ENCODE measurements at regions of chr11 and their contacts with region 1.

Region 1: GRCh38 chr11:20397281-20397680 is 9.8 kb downstream of the PRMT3 start:
- DNase-seq: peak in 7 of 9 donors; percentile 12 to 53 (median 31)
- ATAC-seq: peak; percentile 82
- H3K4me3 ChIP-seq: no peak overlapping the region
- H3K4me3 Mint-ChIP-seq: no peak overlapping the region
- H3K27ac ChIP-seq: no peak overlapping the region
- H3K27ac Mint-ChIP-seq: peak overlapping the region in 1 of 9 donors; percentile 19
- H3K4me1 ChIP-seq: peaks cover 0 to 6% of the 10 kb centered on the region in 2 donors
- H3K4me1 Mint-ChIP-seq: peaks cover 1 to 23% (median 16%) of the 10 kb centered on the region in 7 donors
- H3K27me3 ChIP-seq: no peaks in the 10 kb centered on the region
- H3K27me3 Mint-ChIP-seq: no peaks in the 10 kb centered on the region

Region 2: GRCh38 chr11:20355221-20356219 is 41.8 kb before region 1 on chr11:
- CTCF ChIA-PET with region 1: no interaction called
- POLR2A ChIA-PET with region 1: no interaction called
- intact Hi-C with region 1: no loop called
- DNase-seq: peak in 6 of 9 donors; percentile 14 to 38 (median 23)
- ATAC-seq: peak; percentile 62
- H3K4me3 ChIP-seq: no peak overlapping the region
- H3K4me3 Mint-ChIP-seq: no peak overlapping the region
- H3K27ac ChIP-seq: no peak overlapping the region
- H3K27ac Mint-ChIP-seq: no peak overlapping the region
- H3K4me1 ChIP-seq: peaks cover 4 to 5% of the 10 kb centered on the region in 2 donors
- H3K4me1 Mint-ChIP-seq: peaks cover 8 to 30% (median 14%) of the 10 kb centered on the region in 7 donors
- H3K27me3 ChIP-seq: no peaks in the 10 kb centered on the region
- H3K27me3 Mint-ChIP-seq: peaks cover 0 to 9% (median 0%) of the 10 kb centered on the region in 5 donors

Region 3: GRCh38 chr11:20443596-20443995 is 46.3 kb after region 1 on chr11:
- CTCF ChIA-PET with region 1: no interaction called
- POLR2A ChIA-PET with region 1: no interaction called
- intact Hi-C with region 1: loop called (anchors 1 kb)
- DNase-seq: peak in 4 of 9 donors; percentile 1 to 4 (median 2)
- ATAC-seq: no peak
- H3K4me3 ChIP-seq: no peak overlapping the region
- H3K4me3 Mint-ChIP-seq: no peak overlapping the region
- H3K27ac ChIP-seq: no peak overlapping the region
- H3K27ac Mint-ChIP-seq: no peak overlapping the region
- H3K4me1 ChIP-seq: no peaks in the 10 kb centered on the region
- H3K4me1 Mint-ChIP-seq: peaks cover 0 to 6% (median under 1%) of the 10 kb centered on the region in 7 donors
- H3K27me3 ChIP-seq: no peaks in the 10 kb centered on the region
- H3K27me3 Mint-ChIP-seq: no peaks in the 10 kb centered on the region

Region 4: GRCh38 chr11:20609727-20610707 is 212.7 kb after region 1 on chr11:
- CTCF ChIA-PET with region 1: interaction called, 4 read pairs
- POLR2A ChIA-PET with region 1: no interaction called
- intact Hi-C with region 1: loop called in 1 of 2 experiments (anchors 1 kb)
- DNase-seq: peak in 7 of 9 donors; percentile 5 to 74 (median 36)
- ATAC-seq: peak; percentile 74
- H3K4me3 ChIP-seq: no peak overlapping the region
- H3K4me3 Mint-ChIP-seq: peak overlapping the region in 6 of 10 donors; percentile 39 to 65 (median 58)
- H3K27ac ChIP-seq: no peak overlapping the region
- H3K27ac Mint-ChIP-seq: no peak overlapping the region
- H3K4me1 ChIP-seq: no peaks in the 10 kb centered on the region
- H3K4me1 Mint-ChIP-seq: peaks cover 7 to 20% (median 11%) of the 10 kb centered on the region in 7 donors
- H3K27me3 ChIP-seq: peaks cover 0 to 16% of the 10 kb centered on the region in 2 donors
- H3K27me3 Mint-ChIP-seq: peaks cover 66 to 91% (median 81%) of the 10 kb centered on the region in 5 donors

Measured in naive thymus-derived CD4-positive, alpha-beta T cell (primary cell).